Right cardiac atrium (tissue), 5 donors: ENCODE measurements at regions of chr11 and their contacts with region 1.

Region 1: DNA sequence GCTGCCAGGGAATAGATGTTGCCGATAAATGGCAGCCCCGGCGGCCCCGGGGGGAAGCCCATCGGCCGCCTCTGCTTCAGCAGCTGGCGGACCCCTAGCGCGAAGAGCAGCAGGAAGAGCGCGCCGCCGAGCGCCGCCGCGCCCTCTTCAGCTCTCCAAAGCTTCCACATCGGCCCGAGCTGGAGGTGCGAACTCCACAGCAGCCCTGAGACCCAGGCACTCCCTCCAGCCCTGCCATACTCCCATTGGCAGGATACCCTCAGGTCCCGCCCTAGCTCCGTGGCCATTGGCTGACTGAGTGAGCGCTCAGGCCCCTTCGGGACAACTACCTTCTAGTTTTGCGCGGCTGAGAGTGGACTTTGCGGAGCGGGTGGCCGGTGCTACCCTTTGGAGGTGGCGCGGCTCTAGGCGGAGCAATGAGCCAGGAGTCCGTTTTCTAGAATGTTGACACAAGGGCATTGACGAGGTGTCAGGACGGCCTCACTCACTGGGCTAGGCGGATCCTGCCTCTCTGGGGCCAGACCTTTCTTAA is at the start of gene CYP2R1:
- DNase-seq: peak; percentile 96 to 98 (median 97)
- ATAC-seq: peak; percentile 100
- H3K4me3 ChIP-seq: peak within 1 kb of the TSS; percentile 71
- H3K27ac ChIP-seq: peak within 1 kb of the TSS; percentile 80
- H3K4me1 ChIP-seq: no peaks in the 10 kb centered on the region
- H3K27me3 ChIP-seq: no peaks in the 10 kb centered on the region
- total RNA-seq, gene CYP2R1: 8.2 to 9.8 (median 9.0) TPM

Region 2: DNA sequence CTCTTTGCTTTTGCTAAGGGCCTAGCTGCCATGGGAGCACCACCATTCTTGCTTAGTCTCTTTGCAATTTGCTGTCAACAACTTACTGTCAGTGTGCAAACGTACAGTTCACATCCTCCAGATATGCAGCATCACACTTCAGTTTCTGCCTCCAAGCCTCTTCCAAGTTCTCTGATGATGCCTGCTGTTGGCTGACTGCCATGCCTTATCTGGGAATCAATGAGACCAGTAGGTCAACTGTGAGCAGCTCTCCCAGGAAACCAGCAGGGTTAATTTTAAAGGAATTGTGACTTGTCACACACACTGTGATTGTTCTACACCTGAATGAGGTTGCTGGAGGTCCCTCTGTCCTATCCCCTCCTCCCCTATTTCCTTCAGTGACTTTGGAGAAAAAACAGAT is 448.5 kb before region 1 on chr11:
- intact Hi-C with region 1: no loop called
- DNase-seq: no peak
- ATAC-seq: no peak
- H3K4me3 ChIP-seq: no peak overlapping the region
- H3K27ac ChIP-seq: no peak overlapping the region
- H3K4me1 ChIP-seq: peaks cover 2% of the 10 kb centered on the region
- H3K27me3 ChIP-seq: no peaks in the 10 kb centered on the region

Region 3: GRCh38 chr11:14519917-14520746 is 372.0 kb before region 1 on chr11 and contains the start of gene PSMA1:
- intact Hi-C with region 1: loop called in 1 of 4 experiments (anchors 5 kb)
- DNase-seq: peak; percentile 95 to 98 (median 97)
- ATAC-seq: peak; percentile 98 to 99
- H3K4me3 ChIP-seq: peak within 1 kb of the TSS; percentile 98
- H3K27ac ChIP-seq: peak within 1 kb of the TSS; percentile 97
- H3K4me1 ChIP-seq: no peaks in the 10 kb centered on the region
- H3K27me3 ChIP-seq: no peaks in the 10 kb centered on the region
- total RNA-seq, gene PSMA1: 105 to 132 (median 117) TPM

Region 4: GRCh38 chr11:14643697-14644225 is 248.3 kb before region 1 on chr11 and contains the start of gene PDE3B:
- intact Hi-C with region 1: loop called in 2 of 4 experiments (anchors 10 kb)
- DNase-seq: peak; percentile 88 to 94 (median 92)
- ATAC-seq: peak; percentile 97
- H3K4me3 ChIP-seq: peak within 1 kb of the TSS; percentile 69
- H3K27ac ChIP-seq: peak within 1 kb of the TSS; percentile 65
- H3K4me1 ChIP-seq: peaks cover 3% of the 10 kb centered on the region
- H3K27me3 ChIP-seq: no peaks in the 10 kb centered on the region
- total RNA-seq, gene PDE3B: 8.3 to 18.6 (median 9.4) TPM